CD8-positive, alpha-beta T cell (primary cell): ENCODE measurements at regions of chr11 and their contacts with region 1.

Region 1: DNA sequence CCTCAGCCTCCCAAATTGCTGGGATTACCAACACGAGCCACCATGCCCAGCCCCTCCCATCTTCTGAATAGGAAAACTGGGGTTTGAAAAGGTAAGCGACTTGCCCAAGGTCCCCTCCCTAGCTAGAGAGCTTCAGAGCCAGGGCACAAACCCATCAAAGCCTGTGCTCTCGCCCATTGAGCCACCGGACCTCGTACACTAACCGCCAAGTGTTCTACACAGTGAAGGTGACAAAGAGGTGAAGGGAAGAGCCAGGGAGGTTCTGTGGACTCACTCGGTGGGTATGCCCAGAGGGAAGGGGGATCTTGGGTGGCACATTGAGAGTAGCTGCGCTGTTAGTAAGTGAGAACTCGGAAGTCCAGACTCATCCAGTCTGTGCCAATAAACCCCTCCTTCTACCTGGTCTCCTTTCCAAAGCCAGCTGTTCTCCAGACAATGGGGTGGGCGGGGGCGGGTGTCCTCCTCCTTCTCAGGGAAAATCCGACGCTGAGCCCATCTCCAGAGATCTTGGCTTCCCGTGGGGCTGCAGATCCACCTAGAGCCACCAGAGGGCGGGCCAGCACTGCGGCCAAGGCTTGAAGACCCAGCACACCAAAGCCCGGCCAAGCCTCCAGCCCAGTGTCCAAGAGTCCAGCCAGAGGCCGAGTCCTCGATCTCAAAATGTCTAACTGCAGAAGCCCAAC is 3.2 kb upstream of the RTN4RL2 start:
- DNase-seq: peak in 8 of 9 experiments; percentile 55 to 83 (median 78)
- ATAC-seq: peak; percentile 60
- H3K4me3 ChIP-seq: no peak overlapping the region
- H3K4me3 Mint-ChIP-seq: peak overlapping the region; percentile 73
- H3K27ac ChIP-seq: no peak overlapping the region
- H3K27ac Mint-ChIP-seq: no peak overlapping the region
- H3K4me1 ChIP-seq: peaks cover 37% of the 10 kb centered on the region
- H3K4me1 Mint-ChIP-seq: peaks cover 27% of the 10 kb centered on the region
- H3K27me3 ChIP-seq: peaks cover 14 to 35% of the 10 kb centered on the region in 2 experiments
- H3K27me3 Mint-ChIP-seq: peaks cover 25% of the 10 kb centered on the region
- CTCF ChIP-seq: peak; percentile 99

Region 2: GRCh38 chr11:57345555-57346211 is 111.4 kb before region 1 on chr11:
- CTCF ChIA-PET with region 1: interaction called, 16 read pairs
- POLR2A ChIA-PET with region 1: no interaction called
- intact Hi-C with region 1: loop called in 1 of 2 experiments (anchors 2 kb)
- DNase-seq: peak; percentile 45 to 85 (median 73)
- ATAC-seq: peak; percentile 93
- H3K4me3 ChIP-seq: no peak overlapping the region
- H3K4me3 Mint-ChIP-seq: no peak overlapping the region
- H3K27ac ChIP-seq: no peak overlapping the region
- H3K27ac Mint-ChIP-seq: no peak overlapping the region
- H3K4me1 ChIP-seq: no peaks in the 10 kb centered on the region
- H3K4me1 Mint-ChIP-seq: peaks cover 2% of the 10 kb centered on the region
- H3K27me3 ChIP-seq: no peaks in the 10 kb centered on the region
- H3K27me3 Mint-ChIP-seq: peaks cover 3% of the 10 kb centered on the region
- CTCF ChIP-seq: peak; percentile 80

Region 3: GRCh38 chr11:57444362-57445121 is 12.6 kb before region 1 on chr11:
- CTCF ChIA-PET with region 1: interaction called, 56 read pairs
- POLR2A ChIA-PET with region 1: interaction called, 3 read pairs
- intact Hi-C with region 1: no loop called
- DNase-seq: no peak
- ATAC-seq: no peak
- H3K4me3 ChIP-seq: no peak overlapping the region
- H3K4me3 Mint-ChIP-seq: no peak overlapping the region
- H3K27ac ChIP-seq: no peak overlapping the region
- H3K27ac Mint-ChIP-seq: no peak overlapping the region
- H3K4me1 ChIP-seq: no peaks in the 10 kb centered on the region
- H3K4me1 Mint-ChIP-seq: no peaks in the 10 kb centered on the region
- H3K27me3 ChIP-seq: no peaks in the 10 kb centered on the region
- H3K27me3 Mint-ChIP-seq: peaks cover 12% of the 10 kb centered on the region
- CTCF ChIP-seq: no peak

Region 4: GRCh38 chr11:57480409-57481137 is 23.5 kb after region 1 on chr11:
- CTCF ChIA-PET with region 1: interaction called, 237 read pairs
- POLR2A ChIA-PET with region 1: interaction called, 8 read pairs
- intact Hi-C with region 1: loop called (anchors 1 kb)
- DNase-seq: peak in 8 of 9 experiments; percentile 43 to 74 (median 65)
- ATAC-seq: peak; percentile 51
- H3K4me3 ChIP-seq: no peak overlapping the region
- H3K4me3 Mint-ChIP-seq: no peak overlapping the region
- H3K27ac ChIP-seq: no peak overlapping the region
- H3K27ac Mint-ChIP-seq: no peak overlapping the region
- H3K4me1 ChIP-seq: peaks cover 14% of the 10 kb centered on the region
- H3K4me1 Mint-ChIP-seq: peaks cover 26% of the 10 kb centered on the region
- H3K27me3 ChIP-seq: peaks cover 4 to 10% of the 10 kb centered on the region in 2 experiments
- H3K27me3 Mint-ChIP-seq: peaks cover 10% of the 10 kb centered on the region
- CTCF ChIP-seq: peak; percentile 56

Region 5: DNA sequence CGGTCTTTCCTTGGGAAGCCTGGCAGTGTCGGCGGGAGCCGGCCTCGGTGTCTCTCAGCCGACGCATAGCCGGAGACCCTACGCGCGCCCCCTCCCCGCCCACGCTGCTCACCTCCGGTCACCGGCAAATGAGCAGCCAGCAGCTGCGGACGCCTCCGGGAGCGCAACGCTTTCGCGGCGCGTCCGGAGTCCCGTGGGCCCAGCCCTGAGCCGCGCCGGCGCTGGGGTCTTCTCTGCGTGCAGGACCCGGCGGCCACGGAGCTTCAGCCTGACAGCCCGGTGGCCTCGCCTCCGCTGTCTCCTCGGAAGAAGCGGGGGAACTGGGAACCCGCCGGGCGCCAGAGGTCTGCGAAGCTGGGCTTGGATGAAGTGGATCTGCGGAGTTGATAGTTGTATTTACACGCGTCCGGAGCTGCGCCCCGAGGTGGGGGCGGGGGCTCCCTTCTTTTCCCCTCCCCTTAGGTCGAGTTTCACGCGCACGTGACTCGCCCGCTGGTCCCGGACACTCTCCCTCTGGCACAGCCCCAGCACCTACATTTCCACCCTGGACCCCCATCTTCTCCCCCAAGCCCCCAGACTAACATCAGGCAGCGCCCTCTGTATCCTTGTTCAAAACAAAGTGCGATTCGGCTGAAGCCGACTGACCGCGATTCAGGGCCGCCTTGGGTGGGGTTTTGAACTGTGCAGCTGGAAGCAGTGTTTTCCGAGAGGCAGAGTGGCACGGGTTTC is 58.4 kb after region 1 on chr11 and contains the start of gene SLC43A1:
- CTCF ChIA-PET with region 1: interaction called, 68 read pairs
- POLR2A ChIA-PET with region 1: no interaction called
- intact Hi-C with region 1: no loop called
- DNase-seq: peak in 5 of 9 experiments; percentile 13 to 56 (median 35)
- ATAC-seq: peak; percentile 29
- H3K4me3 ChIP-seq: peak within 1 kb of the TSS; percentile 82 to 90
- H3K4me3 Mint-ChIP-seq: peak within 1 kb of the TSS; percentile 98
- H3K27ac ChIP-seq: peak within 1 kb of the TSS; percentile 46 to 48
- H3K27ac Mint-ChIP-seq: peak within 1 kb of the TSS; percentile 82
- H3K4me1 ChIP-seq: peaks cover 27% of the 10 kb centered on the region
- H3K4me1 Mint-ChIP-seq: peaks cover 32% of the 10 kb centered on the region
- H3K27me3 ChIP-seq: no peaks in the 10 kb centered on the region
- H3K27me3 Mint-ChIP-seq: no peaks in the 10 kb centered on the region
- CTCF ChIP-seq: no peak
- total RNA-seq, gene SLC43A1: 4.4 to 7.5 TPM

Region 6: DNA sequence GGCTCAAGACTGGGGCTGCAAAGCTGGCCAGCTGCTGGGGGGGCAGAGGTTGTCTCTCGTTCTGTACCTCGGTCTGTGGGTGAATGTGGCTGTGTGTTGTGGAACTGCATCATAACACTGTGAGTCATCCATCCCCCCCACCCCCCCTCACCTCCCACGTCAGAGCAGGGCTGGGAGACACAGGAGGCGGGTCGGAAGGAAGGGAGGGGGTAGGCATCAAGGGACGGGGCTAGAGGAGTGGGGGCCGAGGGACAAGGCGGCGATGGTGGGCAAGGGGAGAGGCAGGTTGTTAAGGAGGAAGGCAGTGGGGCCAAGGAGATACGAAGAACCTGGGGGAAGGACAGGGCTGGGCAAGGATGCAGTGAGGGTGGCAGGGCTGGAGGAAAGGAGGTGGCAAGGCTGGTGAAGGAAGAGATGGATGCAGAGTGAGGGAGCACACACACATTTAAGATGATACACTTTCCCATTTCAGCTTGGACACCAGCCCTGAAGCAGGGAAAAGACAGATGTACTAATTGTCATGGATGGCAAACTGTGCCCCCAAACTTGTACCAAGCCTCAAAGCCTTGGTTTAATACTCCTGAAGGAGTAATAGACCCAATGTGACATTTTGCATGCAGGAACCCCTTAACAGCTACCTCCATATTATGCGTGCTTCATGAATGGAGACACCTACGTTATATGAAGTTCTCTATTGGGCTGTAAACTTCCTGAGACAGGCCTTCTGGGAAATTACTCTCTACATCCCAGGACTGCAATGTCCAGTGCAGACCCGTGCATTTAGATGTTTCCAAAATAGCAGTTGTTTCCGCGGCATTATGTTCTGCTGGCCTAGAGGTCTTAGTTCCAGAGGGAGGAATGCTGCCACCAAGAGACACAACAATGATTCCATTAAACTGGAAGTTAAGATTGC is 193.0 kb after region 1 on chr11 and contains the start of gene YPEL4:
- CTCF ChIA-PET with region 1: interaction called, 13 read pairs
- POLR2A ChIA-PET with region 1: no interaction called
- intact Hi-C with region 1: loop called in 1 of 2 experiments (anchors 2 kb)
- DNase-seq: peak; percentile 52 to 93 (median 79)
- ATAC-seq: peak; percentile 88
- H3K4me3 ChIP-seq: peak within 1 kb of the TSS; percentile 53 to 78
- H3K4me3 Mint-ChIP-seq: peak within 1 kb of the TSS; percentile 86
- H3K27ac ChIP-seq: peak within 1 kb of the TSS; percentile 41 to 68
- H3K27ac Mint-ChIP-seq: peak within 1 kb of the TSS; percentile 91
- H3K4me1 ChIP-seq: peaks cover 19% of the 10 kb centered on the region
- H3K4me1 Mint-ChIP-seq: peaks cover 53% of the 10 kb centered on the region
- H3K27me3 ChIP-seq: peaks cover 0 to 20% of the 10 kb centered on the region in 2 experiments
- H3K27me3 Mint-ChIP-seq: peaks cover 41% of the 10 kb centered on the region
- CTCF ChIP-seq: no peak
- total RNA-seq, gene YPEL4: 7.2 to 7.9 TPM